IMR-90 (cell line): ENCODE measurements at regions of chr16 and their contacts with region 1.

Region 1: DNA sequence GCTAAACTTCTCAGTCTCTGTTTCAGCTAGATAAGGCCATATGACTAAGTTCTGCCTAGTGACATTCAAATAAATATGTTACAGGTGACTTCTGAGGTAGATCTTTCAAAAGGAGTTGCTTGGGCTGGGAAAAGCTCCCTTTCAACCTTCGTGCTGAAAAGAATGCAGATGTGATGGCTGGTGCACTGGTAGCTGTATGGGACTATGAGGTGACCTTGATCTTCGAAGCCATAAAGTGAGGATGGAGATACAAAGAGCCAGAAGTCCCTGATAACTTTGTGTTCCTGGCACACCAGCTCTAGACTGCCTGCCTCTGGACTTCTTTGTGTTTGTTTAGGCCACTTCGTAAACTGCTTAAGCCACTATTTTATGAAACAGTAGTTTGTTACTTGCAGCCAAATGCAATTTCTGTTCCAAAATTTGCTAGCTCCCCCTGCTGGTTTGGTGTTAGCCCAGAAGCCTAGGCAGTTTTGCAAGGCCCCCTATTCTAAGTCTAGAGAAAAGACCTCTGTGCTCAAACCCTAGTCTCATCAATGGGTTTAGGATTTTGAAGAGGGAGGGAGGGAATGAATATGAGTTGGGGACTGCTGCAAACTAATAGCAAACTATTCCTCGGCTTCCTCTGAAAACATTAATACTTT is 23.3 kb upstream of the ERCC4 start:
- DNase-seq: peak; percentile 6
- ATAC-seq: no peak
- H3K4me3 ChIP-seq: no peak overlapping the region
- H3K27ac ChIP-seq: no peak overlapping the region
- H3K4me1 ChIP-seq: no peaks in the 10 kb centered on the region
- H3K27me3 ChIP-seq: no peaks in the 10 kb centered on the region; the same call in 1 of the 2 replicates
- CTCF ChIP-seq: peak; percentile 21; the same call in 1 of the 2 replicates
- POLR2A ChIP-seq: no peak
- RAD21 ChIP-seq: no peak

Region 2: GRCh38 chr16:12455287-12455798 is 1441.3 kb before region 1 on chr16:
- CTCF ChIA-PET with region 1: no interaction called
- POLR2A ChIA-PET with region 1: no interaction called
- dilution Hi-C with region 1: no loop called
- in situ Hi-C with region 1: loop called (anchors 25 kb)
- intact Hi-C with region 1: no loop called
- DNase-seq: peak; percentile 55
- ATAC-seq: peak; percentile 100
- H3K4me3 ChIP-seq: no peak overlapping the region
- H3K27ac ChIP-seq: no peak overlapping the region
- H3K4me1 ChIP-seq: no peaks in the 10 kb centered on the region
- H3K27me3 ChIP-seq: no peaks in the 10 kb centered on the region
- CTCF ChIP-seq: peak; percentile 89
- POLR2A ChIP-seq: no peak
- RAD21 ChIP-seq: peak; percentile 94

Region 3: GRCh38 chr16:14003074-14003570 is 106.5 kb after region 1 on chr16:
- CTCF ChIA-PET with region 1: no interaction called
- POLR2A ChIA-PET with region 1: no interaction called
- dilution Hi-C with region 1: no loop called
- in situ Hi-C with region 1: no loop called
- intact Hi-C with region 1: no loop called
- DNase-seq: peak; percentile 72
- ATAC-seq: peak; percentile 94
- H3K4me3 ChIP-seq: peak overlapping the region; percentile 15
- H3K27ac ChIP-seq: no peak overlapping the region
- H3K4me1 ChIP-seq: no peaks in the 10 kb centered on the region
- H3K27me3 ChIP-seq: peaks cover 9% of the 10 kb centered on the region
- CTCF ChIP-seq: no peak; the same call in 1 of the 2 replicates
- POLR2A ChIP-seq: no peak
- RAD21 ChIP-seq: peak; percentile 17; the same call in 1 of the 2 replicates